IMR-90 (cell line): ENCODE measurements at regions of chr9 and their contacts with region 1.

Region 1: GRCh38 chr9:135961277-135961705 is at the start of gene UBAC1:
- DNase-seq: peak; percentile 94
- ATAC-seq: peak; percentile 93
- H3K4me3 ChIP-seq: peak within 1 kb of the TSS; percentile 74
- H3K27ac ChIP-seq: peak within 1 kb of the TSS; percentile 47
- H3K4me1 ChIP-seq: no peaks in the 10 kb centered on the region; the same call in none of the 2 replicates
- H3K27me3 ChIP-seq: no peaks in the 10 kb centered on the region; the same call in 1 of the 2 replicates
- CTCF ChIP-seq: peak; percentile 55
- POLR2A ChIP-seq: no peak
- RAD21 ChIP-seq: no peak
- total RNA-seq, gene UBAC1: 25.3 and 33.6 TPM in 2 replicates

Region 2: GRCh38 chr9:135485832-135486231 is 475.5 kb before region 1 on chr9:
- CTCF ChIA-PET with region 1: no interaction called
- POLR2A ChIA-PET with region 1: interaction called, 10 read pairs
- dilution Hi-C with region 1: no loop called
- in situ Hi-C with region 1: no loop called
- intact Hi-C with region 1: no loop called
- DNase-seq: no peak
- ATAC-seq: no peak
- H3K4me3 ChIP-seq: no peak overlapping the region
- H3K27ac ChIP-seq: no peak overlapping the region
- H3K4me1 ChIP-seq: peaks cover 2% of the 10 kb centered on the region; the same call in 1 of the 2 replicates
- H3K27me3 ChIP-seq: no peaks in the 10 kb centered on the region
- CTCF ChIP-seq: no peak
- POLR2A ChIP-seq: no peak
- RAD21 ChIP-seq: no peak

Region 3: DNA sequence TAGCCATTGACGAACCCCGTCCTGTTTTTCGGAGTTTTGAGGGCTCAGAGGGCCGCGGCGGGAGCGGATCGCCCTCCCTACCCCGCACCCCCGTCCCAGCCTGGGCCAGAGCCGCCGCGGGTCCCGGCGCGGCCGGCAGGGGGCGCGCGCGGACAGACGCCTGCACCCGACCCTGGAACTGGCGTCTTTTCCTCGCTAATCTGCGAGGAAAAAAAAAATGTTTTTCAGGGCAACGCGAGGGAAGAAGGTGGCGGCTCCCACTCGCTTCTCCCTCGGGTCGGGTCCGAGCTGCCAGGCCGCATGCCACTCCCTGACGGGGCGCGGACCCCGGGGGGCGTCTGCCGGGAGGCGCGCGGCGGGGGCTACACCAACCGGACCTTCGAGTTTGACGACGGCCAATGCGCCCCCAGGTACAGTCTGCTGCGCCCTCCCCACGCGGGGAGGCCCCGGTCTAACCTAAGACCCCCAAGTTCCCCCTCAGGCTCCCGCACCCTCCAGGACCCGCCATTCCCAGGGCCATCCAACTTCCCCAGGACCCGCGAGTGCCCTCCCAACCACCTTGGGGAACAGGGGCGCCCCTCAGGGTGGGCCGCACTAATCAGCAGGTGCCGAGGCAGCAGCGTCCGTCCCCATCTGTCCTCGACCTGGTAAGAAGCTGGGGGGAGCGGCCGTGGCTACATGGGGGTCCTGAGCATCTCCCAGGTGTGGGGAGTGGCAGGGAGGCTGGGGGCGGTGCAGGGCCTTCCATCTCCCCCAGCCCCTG is 259.2 kb before region 1 on chr9 and contains the start of gene KCNT1:
- CTCF ChIA-PET with region 1: no interaction called
- POLR2A ChIA-PET with region 1: no interaction called
- dilution Hi-C with region 1: no loop called
- in situ Hi-C with region 1: no loop called
- intact Hi-C with region 1: loop called (anchors 5 kb)
- DNase-seq: peak; percentile 13
- ATAC-seq: peak; percentile 95
- H3K4me3 ChIP-seq: no peak within 1 kb of the TSS
- H3K27ac ChIP-seq: no peak within 1 kb of the TSS
- H3K4me1 ChIP-seq: peaks cover 1% of the 10 kb centered on the region; the same call in 1 of the 2 replicates
- H3K27me3 ChIP-seq: peaks cover 18% of the 10 kb centered on the region; the same call in 1 of the 2 replicates
- CTCF ChIP-seq: peak; percentile 92
- POLR2A ChIP-seq: no peak
- RAD21 ChIP-seq: peak; percentile 65
- total RNA-seq, gene KCNT1: not detected in 2 replicates

Region 4: DNA sequence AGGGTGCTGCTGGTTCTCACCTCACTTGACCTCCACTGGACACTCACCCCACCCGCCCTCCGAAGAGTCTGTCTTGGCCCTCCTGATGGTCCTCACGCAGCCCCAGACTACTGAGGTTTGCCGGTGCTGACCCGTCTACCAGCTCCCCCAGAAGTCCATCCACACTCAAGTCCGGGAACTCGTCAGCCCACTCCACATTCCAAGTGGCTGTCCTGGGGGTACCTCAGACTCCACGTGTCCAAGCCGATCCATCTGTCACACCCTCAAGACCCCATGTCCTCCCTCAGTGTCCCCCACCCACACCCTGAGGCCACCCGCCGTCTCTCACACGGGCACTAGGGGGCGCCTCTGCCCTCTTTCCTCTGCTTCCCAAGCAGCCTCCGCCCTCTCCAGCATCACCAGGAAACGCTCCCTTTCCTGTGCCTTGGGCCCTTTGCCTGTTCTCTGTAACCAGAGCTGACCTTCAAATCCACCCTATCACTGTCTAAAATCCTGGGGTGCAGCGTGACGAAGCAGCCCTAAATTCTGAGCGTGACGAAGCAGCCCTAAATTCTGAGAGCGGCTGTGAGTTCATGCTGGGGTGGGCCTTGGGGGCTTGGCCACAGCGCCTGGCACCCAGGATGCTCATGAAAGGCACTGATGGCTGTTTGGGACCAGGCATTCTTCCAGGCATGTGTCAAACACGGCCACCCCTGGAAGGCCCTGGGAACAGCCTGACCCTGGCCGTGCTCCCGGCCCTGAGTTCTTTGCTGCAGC is 163.6 kb before region 1 on chr9:
- CTCF ChIA-PET with region 1: no interaction called
- POLR2A ChIA-PET with region 1: no interaction called
- dilution Hi-C with region 1: no loop called
- in situ Hi-C with region 1: no loop called
- intact Hi-C with region 1: loop called (anchors 2 kb)
- DNase-seq: peak; percentile 31
- ATAC-seq: peak; percentile 94
- H3K4me3 ChIP-seq: no peak overlapping the region
- H3K27ac ChIP-seq: no peak overlapping the region
- H3K4me1 ChIP-seq: no peaks in the 10 kb centered on the region
- H3K27me3 ChIP-seq: peaks cover 9% of the 10 kb centered on the region
- CTCF ChIP-seq: peak; percentile 66
- POLR2A ChIP-seq: no peak
- RAD21 ChIP-seq: peak; percentile 65

Region 5: DNA sequence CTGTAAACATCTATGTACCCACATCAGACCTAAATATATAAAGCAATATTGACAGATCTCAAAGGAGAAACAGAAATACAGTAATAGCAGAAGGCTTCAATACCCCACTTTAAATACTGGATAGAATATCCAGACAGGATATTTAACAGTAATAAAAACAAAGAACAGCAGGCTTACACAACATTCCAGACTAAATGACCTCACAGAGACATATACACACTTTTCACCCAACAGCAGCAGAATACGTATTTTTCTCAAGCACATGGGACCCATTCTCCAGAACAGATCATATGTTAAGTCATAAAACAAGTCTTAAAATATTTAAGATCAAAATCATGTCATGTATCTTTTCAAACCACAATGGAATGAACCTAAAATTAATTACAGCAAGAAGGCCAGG is 130.8 kb before region 1 on chr9:
- CTCF ChIA-PET with region 1: no interaction called
- POLR2A ChIA-PET with region 1: no interaction called
- dilution Hi-C with region 1: no loop called
- in situ Hi-C with region 1: no loop called
- intact Hi-C with region 1: no loop called
- DNase-seq: peak; percentile 69
- ATAC-seq: peak; percentile 77
- H3K4me3 ChIP-seq: no peak overlapping the region
- H3K27ac ChIP-seq: no peak overlapping the region
- H3K4me1 ChIP-seq: no peaks in the 10 kb centered on the region
- H3K27me3 ChIP-seq: no peaks in the 10 kb centered on the region
- CTCF ChIP-seq: no peak
- POLR2A ChIP-seq: no peak
- RAD21 ChIP-seq: no peak

Region 6: DNA sequence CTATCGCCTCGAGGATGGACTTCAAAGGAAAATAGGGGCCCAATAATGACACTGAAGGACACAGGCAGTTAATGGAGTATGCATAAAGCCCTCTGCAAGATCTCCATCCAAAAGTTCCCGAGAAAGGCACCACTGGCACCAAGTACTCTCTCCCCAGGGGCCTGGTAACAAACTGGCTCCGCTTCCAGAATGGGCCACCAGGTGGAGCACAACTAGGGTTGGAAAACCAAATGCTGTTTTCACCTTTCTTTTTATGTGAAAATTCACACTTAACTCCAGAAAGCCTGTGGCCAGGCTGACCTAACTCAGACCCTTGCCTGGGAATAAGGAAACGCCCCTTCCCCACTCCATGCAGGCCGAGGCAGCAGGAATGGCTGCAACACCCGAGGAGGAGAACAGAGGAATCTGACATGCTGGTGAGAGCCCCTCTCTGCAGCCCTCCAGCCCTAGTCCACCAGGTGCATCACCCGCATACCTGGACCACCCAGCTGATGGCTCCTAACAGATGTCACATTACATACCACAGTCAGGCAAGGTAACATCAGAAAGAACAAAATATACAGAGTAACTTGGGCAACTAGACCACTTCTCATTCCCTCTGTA is 96.7 kb before region 1 on chr9:
- CTCF ChIA-PET with region 1: no interaction called
- POLR2A ChIA-PET with region 1: no interaction called
- dilution Hi-C with region 1: no loop called
- in situ Hi-C with region 1: no loop called
- intact Hi-C with region 1: loop called (anchors 2 kb)
- DNase-seq: peak; percentile 43
- ATAC-seq: peak; percentile 88
- H3K4me3 ChIP-seq: no peak overlapping the region
- H3K27ac ChIP-seq: no peak overlapping the region
- H3K4me1 ChIP-seq: peaks cover 2% of the 10 kb centered on the region
- H3K27me3 ChIP-seq: no peaks in the 10 kb centered on the region
- CTCF ChIP-seq: peak; percentile 72
- POLR2A ChIP-seq: no peak
- RAD21 ChIP-seq: peak; percentile 62

Region 7: GRCh38 chr9:135914921-135915320 is 46.4 kb before region 1 on chr9:
- CTCF ChIA-PET with region 1: no interaction called
- POLR2A ChIA-PET with region 1: no interaction called
- dilution Hi-C with region 1: no loop called
- in situ Hi-C with region 1: no loop called
- intact Hi-C with region 1: no loop called
- DNase-seq: peak; percentile 90
- ATAC-seq: peak; percentile 87
- H3K4me3 ChIP-seq: no peak overlapping the region
- H3K27ac ChIP-seq: no peak overlapping the region
- H3K4me1 ChIP-seq: no peaks in the 10 kb centered on the region
- H3K27me3 ChIP-seq: no peaks in the 10 kb centered on the region
- CTCF ChIP-seq: peak; percentile 23; the same call in 1 of the 2 replicates
- POLR2A ChIP-seq: no peak
- RAD21 ChIP-seq: peak; percentile 42; the same call in 1 of the 2 replicates

Region 8: GRCh38 chr9:136174779-136175615 is 213.7 kb after region 1 on chr9:
- CTCF ChIA-PET with region 1: no interaction called
- POLR2A ChIA-PET with region 1: no interaction called
- dilution Hi-C with region 1: no loop called
- in situ Hi-C with region 1: no loop called
- intact Hi-C with region 1: no loop called
- DNase-seq: no peak
- ATAC-seq: no peak
- H3K4me3 ChIP-seq: no peak overlapping the region
- H3K27ac ChIP-seq: no peak overlapping the region
- H3K4me1 ChIP-seq: no peaks in the 10 kb centered on the region
- H3K27me3 ChIP-seq: peaks cover 52% of the 10 kb centered on the region
- CTCF ChIP-seq: no peak
- POLR2A ChIP-seq: no peak
- RAD21 ChIP-seq: no peak